ENCODE measurements at regions of chr4 and their contacts with region 1.

Region 1: DNA sequence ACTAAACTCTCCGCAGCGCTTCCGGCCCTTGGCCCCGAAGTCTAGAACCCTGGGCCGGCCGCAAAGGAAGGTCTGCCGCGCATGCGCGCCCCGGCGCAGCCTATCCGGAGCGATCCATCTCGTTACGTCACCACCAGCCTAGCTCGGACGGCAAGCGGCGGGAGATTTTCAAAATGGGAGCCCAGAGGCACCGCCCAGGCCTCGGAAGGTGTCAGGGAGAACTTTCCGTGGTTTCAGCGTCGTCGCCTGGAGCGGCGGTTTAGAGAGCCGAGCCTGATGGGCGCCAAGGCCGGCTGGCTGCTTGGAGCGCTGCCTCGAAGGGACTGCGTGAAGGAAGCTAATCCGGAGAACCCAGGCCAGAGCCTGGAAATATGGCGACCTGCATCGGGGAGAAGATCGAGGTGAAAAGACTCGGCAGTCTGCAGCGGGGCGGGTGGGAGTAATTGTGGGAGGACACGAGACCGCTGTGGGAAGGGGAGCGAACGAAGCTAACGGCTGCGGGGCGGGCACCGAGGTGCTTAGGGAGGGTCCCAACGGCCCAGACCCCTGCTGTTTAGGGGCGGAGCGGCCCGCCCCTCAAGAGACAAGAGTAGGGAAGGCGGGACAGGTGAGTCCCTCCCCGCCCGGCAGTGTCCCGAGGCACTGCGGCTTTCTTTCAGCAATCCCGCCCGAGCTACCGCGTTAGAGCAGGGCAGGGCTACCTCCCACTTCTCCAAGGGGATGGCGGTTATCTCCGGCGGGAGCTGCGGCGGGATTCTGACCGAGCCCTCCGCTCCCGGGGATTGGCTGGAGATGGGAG is at the start of gene PLK4:
- DNase-seq: peak; percentile 97
- H3K4me3 Mint-ChIP-seq: peak within 1 kb of the TSS; percentile 93
- H3K27ac Mint-ChIP-seq: peak within 1 kb of the TSS; percentile 91
- H3K4me1 Mint-ChIP-seq: peaks cover 36% of the 10 kb centered on the region
- H3K27me3 Mint-ChIP-seq: no peaks in the 10 kb centered on the region
- total RNA-seq, gene PLK4: 47.4 and 50.1 TPM in 2 replicates

Region 2: GRCh38 chr4:127782274-127783025 is 98.5 kb before region 1 on chr4 and contains the start of gene HSPA4L:
- intact Hi-C with region 1: loop called (anchors 1 kb)
- DNase-seq: peak; percentile 59
- H3K4me3 Mint-ChIP-seq: peak within 1 kb of the TSS; percentile 88
- H3K27ac Mint-ChIP-seq: peak within 1 kb of the TSS; percentile 80
- H3K4me1 Mint-ChIP-seq: peaks cover 24% of the 10 kb centered on the region
- H3K27me3 Mint-ChIP-seq: peaks cover 62% of the 10 kb centered on the region
- total RNA-seq, gene HSPA4L: 5.0 and 5.2 TPM in 2 replicates

Region 3: GRCh38 chr4:127849505-127850234 is 31.3 kb before region 1 on chr4:
- intact Hi-C with region 1: no loop called
- DNase-seq: no peak
- H3K4me3 Mint-ChIP-seq: no peak overlapping the region
- H3K27ac Mint-ChIP-seq: no peak overlapping the region
- H3K4me1 Mint-ChIP-seq: no peaks in the 10 kb centered on the region
- H3K27me3 Mint-ChIP-seq: no peaks in the 10 kb centered on the region

Region 4: GRCh38 chr4:127965062-127965802 is 84.3 kb after region 1 on chr4 and contains the starts of genes ABHD18 and MFSD8:
- intact Hi-C with region 1: loop called (anchors 1 kb)
- DNase-seq: peak; percentile 100
- H3K4me3 Mint-ChIP-seq: peak within 1 kb of the TSS; percentile 95
- H3K27ac Mint-ChIP-seq: peak within 1 kb of the TSS; percentile 93
- H3K4me1 Mint-ChIP-seq: peaks cover 26% of the 10 kb centered on the region
- H3K27me3 Mint-ChIP-seq: no peaks in the 10 kb centered on the region
- total RNA-seq, gene ABHD18: 21.0 and 23.9 TPM in 2 replicates
- total RNA-seq, gene MFSD8: 18.7 and 20.2 TPM in 2 replicates

Region 5: GRCh38 chr4:128060699-128061565 is 180.0 kb after region 1 on chr4 and contains the start of gene LARP1B:
- intact Hi-C with region 1: loop called (anchors 1 kb)
- DNase-seq: peak; percentile 93
- H3K4me3 Mint-ChIP-seq: peak within 1 kb of the TSS; percentile 90
- H3K27ac Mint-ChIP-seq: peak within 1 kb of the TSS; percentile 95
- H3K4me1 Mint-ChIP-seq: peaks cover 12% of the 10 kb centered on the region
- H3K27me3 Mint-ChIP-seq: no peaks in the 10 kb centered on the region
- total RNA-seq, gene LARP1B: 31.9 and 32.2 TPM in 2 replicates

Region 6: GRCh38 chr4:128177498-128177897 is 296.5 kb after region 1 on chr4:
- intact Hi-C with region 1: loop called (anchors 5 kb)
- DNase-seq: no peak
- H3K4me3 Mint-ChIP-seq: no peak overlapping the region
- H3K27ac Mint-ChIP-seq: peak overlapping the region; percentile 58
- H3K4me1 Mint-ChIP-seq: peaks cover 11% of the 10 kb centered on the region
- H3K27me3 Mint-ChIP-seq: no peaks in the 10 kb centered on the region

Region 7: GRCh38 chr4:128287871-128288688 is 407.1 kb after region 1 on chr4:
- intact Hi-C with region 1: loop called (anchors 2 kb)
- DNase-seq: peak; percentile 97
- H3K4me3 Mint-ChIP-seq: peak overlapping the region; percentile 95
- H3K27ac Mint-ChIP-seq: peak overlapping the region; percentile 91
- H3K4me1 Mint-ChIP-seq: peaks cover 29% of the 10 kb centered on the region
- H3K27me3 Mint-ChIP-seq: no peaks in the 10 kb centered on the region

Region 8: DNA sequence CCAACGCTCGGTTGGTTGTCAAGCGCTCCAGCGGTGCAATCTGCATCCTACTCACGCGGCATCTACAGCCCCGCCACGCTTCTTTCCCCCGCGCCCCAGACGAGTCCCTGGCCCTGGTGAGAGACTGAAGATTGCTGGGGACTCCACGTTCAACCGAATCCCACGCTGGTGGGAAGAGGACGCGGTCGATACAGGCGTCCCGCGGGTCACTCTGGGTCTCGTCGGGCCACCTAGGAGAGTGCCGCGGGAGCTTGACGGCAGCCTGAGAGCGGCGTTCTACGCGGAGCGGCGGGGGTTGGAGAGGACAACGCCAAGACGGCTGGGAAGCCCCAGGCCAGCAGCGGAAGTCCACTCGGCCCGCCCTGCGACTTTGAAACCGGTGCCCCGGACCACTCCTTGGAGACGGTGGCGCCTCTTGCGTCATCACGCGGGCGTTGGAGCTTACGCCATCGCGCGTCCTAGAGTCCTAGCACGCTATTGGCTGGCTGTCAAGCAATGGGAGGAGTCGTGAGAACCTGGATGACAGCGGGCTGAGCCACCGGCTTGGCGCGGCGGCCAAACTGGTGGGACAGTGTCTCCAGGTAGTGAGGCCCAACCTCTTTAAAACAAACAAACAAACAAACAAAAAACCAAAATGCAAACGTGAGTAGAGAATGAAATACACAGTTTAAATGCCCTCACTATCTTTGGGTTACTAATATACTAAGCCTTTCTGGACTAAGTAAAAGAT is 1212.4 kb after region 1 on chr4 and contains the start of gene SCLT1:
- intact Hi-C with region 1: loop called (anchors 1 kb)
- DNase-seq: peak; percentile 95
- H3K4me3 Mint-ChIP-seq: peak within 1 kb of the TSS; percentile 37
- H3K27ac Mint-ChIP-seq: peak within 1 kb of the TSS; percentile 20
- H3K4me1 Mint-ChIP-seq: peaks cover 45% of the 10 kb centered on the region
- H3K27me3 Mint-ChIP-seq: no peaks in the 10 kb centered on the region
- total RNA-seq, gene SCLT1: 23.7 and 24.1 TPM in 2 replicates

Measured in activated T-helper 2 cell treated with anti-CD3 and anti-CD28 coated beads, Interferon-gamma antibody, Interleukin-2, Interleukin-4, amounts not matched to agents 10 μg/mL and 5 μg/mL and 100 μg/mL, durations not matched to agents 14 hours and 24 hours and 36 hours (primary cell).